Activated CD8-positive, alpha-beta T cell treated with anti-CD3 and anti-CD28 coated beads, Interleukin-2, amount 10 ng/mL, durations not matched to agents 7 days and 5 days (primary cell): ENCODE measurements at regions of chr1 and their contacts with region 1.

Region 1: DNA sequence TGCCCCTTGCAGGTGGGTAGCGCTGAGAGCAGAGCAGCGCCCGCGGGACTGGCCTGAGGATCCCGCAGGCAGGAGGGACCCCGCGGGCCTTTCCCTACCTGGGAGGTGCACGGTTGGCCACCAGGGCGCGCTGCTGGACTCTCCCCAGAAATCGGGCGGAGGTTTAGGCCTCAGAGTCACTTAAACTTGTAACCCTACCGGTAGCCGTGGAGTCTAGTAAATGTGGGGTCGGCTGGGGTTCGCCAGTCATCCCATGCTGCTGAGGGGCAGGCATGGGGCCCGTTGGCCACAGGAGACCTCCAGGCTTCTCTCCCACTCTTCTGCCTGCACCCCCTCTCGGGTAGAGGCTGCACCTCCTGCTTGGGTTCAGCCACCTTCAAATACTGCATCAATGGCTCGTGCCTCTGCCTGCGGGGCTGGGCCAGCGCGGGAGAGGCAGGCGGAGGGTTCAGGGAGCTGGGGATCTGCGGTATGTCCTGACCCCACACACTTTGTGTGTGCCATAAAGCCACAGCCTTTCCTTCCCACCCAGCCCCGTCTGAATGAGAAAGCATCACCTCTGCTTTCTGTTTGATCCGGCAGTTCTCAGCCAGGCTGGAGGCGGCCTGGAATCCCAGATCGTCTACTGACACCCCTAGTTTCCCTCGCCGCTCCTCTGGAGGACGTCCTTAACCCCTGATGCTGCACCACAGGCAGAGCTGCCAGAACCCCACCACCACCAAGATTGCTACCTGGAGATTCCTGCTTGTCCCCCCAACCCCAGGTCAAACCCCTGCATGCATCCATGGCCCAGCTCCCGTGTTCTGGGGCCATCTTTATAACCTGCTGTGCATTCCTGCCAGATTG is 12.3 kb upstream of the GSTM4 start:
- DNase-seq: peak; percentile 93
- ATAC-seq: peak; percentile 98
- H3K4me3 Mint-ChIP-seq: no peak overlapping the region
- H3K27ac Mint-ChIP-seq: peak overlapping the region; percentile 25
- H3K4me1 Mint-ChIP-seq: peaks cover 18% of the 10 kb centered on the region
- H3K27me3 Mint-ChIP-seq: peaks cover 8% of the 10 kb centered on the region

Region 2: GRCh38 chr1:109350655-109351054 is 293.0 kb before region 1 on chr1:
- CTCF ChIA-PET with region 1: no interaction called
- POLR2A ChIA-PET with region 1: no interaction called
- DNase-seq: no peak
- ATAC-seq: no peak
- H3K4me3 Mint-ChIP-seq: no peak overlapping the region
- H3K27ac Mint-ChIP-seq: no peak overlapping the region
- H3K4me1 Mint-ChIP-seq: peaks cover 13% of the 10 kb centered on the region
- H3K27me3 Mint-ChIP-seq: no peaks in the 10 kb centered on the region

Region 3: GRCh38 chr1:109548321-109549267 is 95.0 kb before region 1 on chr1 and contains the start of gene GNAI3:
- CTCF ChIA-PET with region 1: interaction called, 191 read pairs
- POLR2A ChIA-PET with region 1: interaction called, 29 read pairs
- DNase-seq: peak; percentile 98
- ATAC-seq: peak; percentile 92
- H3K4me3 Mint-ChIP-seq: peak within 1 kb of the TSS; percentile 97
- H3K27ac Mint-ChIP-seq: peak within 1 kb of the TSS; percentile 98
- H3K4me1 Mint-ChIP-seq: peaks cover 44% of the 10 kb centered on the region
- H3K27me3 Mint-ChIP-seq: no peaks in the 10 kb centered on the region
- total RNA-seq, gene GNAI3: 9.6 to 10.2 TPM

Region 4: GRCh38 chr1:109613361-109614147 is 30.1 kb before region 1 on chr1:
- CTCF ChIA-PET with region 1: interaction called, 22 read pairs
- POLR2A ChIA-PET with region 1: no interaction called
- DNase-seq: no peak
- ATAC-seq: no peak
- H3K4me3 Mint-ChIP-seq: no peak overlapping the region
- H3K27ac Mint-ChIP-seq: no peak overlapping the region
- H3K4me1 Mint-ChIP-seq: peaks cover 26% of the 10 kb centered on the region
- H3K27me3 Mint-ChIP-seq: peaks cover 3% of the 10 kb centered on the region

Region 5: GRCh38 chr1:109667452-109668122 is 24.0 kb after region 1 on chr1 and contains the start of gene GSTM2:
- CTCF ChIA-PET with region 1: interaction called, 27 read pairs
- POLR2A ChIA-PET with region 1: no interaction called
- DNase-seq: peak; percentile 81
- ATAC-seq: peak; percentile 97
- H3K4me3 Mint-ChIP-seq: peak within 1 kb of the TSS; percentile 72
- H3K27ac Mint-ChIP-seq: no peak within 1 kb of the TSS
- H3K4me1 Mint-ChIP-seq: peaks cover 32% of the 10 kb centered on the region
- H3K27me3 Mint-ChIP-seq: no peaks in the 10 kb centered on the region
- total RNA-seq, gene GSTM2: 18.2 to 19.3 TPM

Region 6: DNA sequence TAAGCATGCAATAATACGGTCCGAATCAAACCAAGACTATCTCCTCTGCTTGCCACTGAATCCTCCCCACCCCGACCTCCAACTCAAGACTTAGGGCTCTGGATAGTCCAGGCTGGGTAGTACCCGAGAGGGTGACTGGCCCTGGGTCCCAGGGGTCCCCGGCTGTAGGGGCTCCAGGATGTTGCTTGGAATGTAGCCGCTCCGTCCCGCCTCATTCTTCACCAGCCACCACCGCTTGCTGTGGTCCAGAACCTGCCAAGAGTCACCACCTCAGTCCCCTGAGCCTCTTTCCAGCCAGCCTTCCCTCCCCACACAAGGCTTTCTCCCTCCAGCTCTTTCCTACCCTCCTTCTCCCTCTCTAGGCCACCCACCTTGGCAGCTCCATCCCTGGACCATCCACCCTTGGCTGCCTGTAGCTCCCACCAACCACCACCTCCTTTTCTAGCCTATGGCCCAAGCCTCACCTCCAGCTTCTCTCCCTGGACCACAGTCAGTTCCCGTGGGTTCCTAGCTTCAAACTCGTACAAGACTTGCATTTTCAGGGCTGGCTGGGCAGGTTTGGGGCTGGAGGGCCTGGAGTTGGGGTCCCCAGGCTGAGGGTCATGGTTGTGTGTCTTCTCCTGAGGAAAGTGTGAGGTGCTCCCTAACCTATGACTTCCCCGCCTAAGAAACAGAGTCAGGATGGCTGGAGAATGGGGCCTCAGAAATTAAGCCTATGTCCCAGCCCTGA is 108.1 kb after region 1 on chr1:
- CTCF ChIA-PET with region 1: interaction called, 19 read pairs
- POLR2A ChIA-PET with region 1: no interaction called
- DNase-seq: no peak
- ATAC-seq: no peak
- H3K4me3 Mint-ChIP-seq: no peak overlapping the region
- H3K27ac Mint-ChIP-seq: no peak overlapping the region
- H3K4me1 Mint-ChIP-seq: no peaks in the 10 kb centered on the region
- H3K27me3 Mint-ChIP-seq: peaks cover 18% of the 10 kb centered on the region

Region 7: GRCh38 chr1:109827466-109827865 is 183.9 kb after region 1 on chr1:
- CTCF ChIA-PET with region 1: no interaction called
- POLR2A ChIA-PET with region 1: no interaction called
- DNase-seq: no peak
- ATAC-seq: no peak
- H3K4me3 Mint-ChIP-seq: no peak overlapping the region
- H3K27ac Mint-ChIP-seq: no peak overlapping the region
- H3K4me1 Mint-ChIP-seq: peaks cover 30% of the 10 kb centered on the region
- H3K27me3 Mint-ChIP-seq: no peaks in the 10 kb centered on the region

Region 8: GRCh38 chr1:109984456-109985275 is 341.1 kb after region 1 on chr1 and contains the start of gene AHCYL1:
- CTCF ChIA-PET with region 1: interaction called, 146 read pairs
- POLR2A ChIA-PET with region 1: interaction called, 4 read pairs
- DNase-seq: peak; percentile 100
- ATAC-seq: peak; percentile 98
- H3K4me3 Mint-ChIP-seq: peak within 1 kb of the TSS; percentile 100
- H3K27ac Mint-ChIP-seq: peak within 1 kb of the TSS; percentile 97
- H3K4me1 Mint-ChIP-seq: peaks cover 38% of the 10 kb centered on the region
- H3K27me3 Mint-ChIP-seq: no peaks in the 10 kb centered on the region
- total RNA-seq, gene AHCYL1: 55.0 to 64.5 TPM

Region 9: GRCh38 chr1:110034451-110035235 is 391.0 kb after region 1 on chr1 and contains the start of gene STRIP1:
- CTCF ChIA-PET with region 1: interaction called, 12 read pairs
- POLR2A ChIA-PET with region 1: interaction called, 3 read pairs
- DNase-seq: peak; percentile 96
- ATAC-seq: peak; percentile 92
- H3K4me3 Mint-ChIP-seq: peak within 1 kb of the TSS; percentile 82
- H3K27ac Mint-ChIP-seq: peak within 1 kb of the TSS; percentile 86
- H3K4me1 Mint-ChIP-seq: peaks cover 57% of the 10 kb centered on the region
- H3K27me3 Mint-ChIP-seq: no peaks in the 10 kb centered on the region
- total RNA-seq, gene STRIP1: 33.2 to 35.9 TPM